ENCODE measurements at regions of chr9 and their contacts with region 1.

Region 1: DNA sequence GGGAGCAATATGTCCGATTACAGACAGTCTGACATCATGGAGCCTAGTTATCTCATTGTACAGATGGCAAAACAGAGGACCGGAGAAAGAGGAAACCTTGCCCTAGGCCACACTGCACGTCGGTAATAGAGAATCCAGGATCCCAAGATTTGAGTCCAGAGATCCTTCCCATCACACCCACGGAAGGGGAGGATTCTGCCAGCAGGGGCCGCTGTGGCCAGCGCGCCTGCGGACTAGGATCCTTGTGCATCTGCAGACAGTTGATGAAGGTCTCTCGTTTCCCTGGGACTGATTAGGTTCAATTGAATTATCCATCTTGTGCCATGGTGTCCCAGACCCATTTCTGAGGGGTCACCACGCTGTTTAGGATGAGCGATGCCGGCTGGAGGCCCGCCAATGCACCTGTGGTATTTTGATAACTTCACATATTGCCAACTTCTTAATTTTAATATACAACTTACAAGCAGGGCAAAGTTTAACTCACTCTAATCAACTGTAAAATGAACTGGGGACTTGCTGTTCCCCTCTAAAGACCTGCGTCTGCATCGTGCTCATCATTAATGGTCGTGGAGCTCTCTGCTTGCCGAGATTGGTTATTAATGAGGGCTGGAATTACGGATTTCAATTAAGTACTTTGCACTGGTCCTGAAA is 592.7 kb upstream of the BRINP1 start:
- DNase-seq: peak in 1 of 2 donors; percentile 19
- ATAC-seq: peak in 1 of 2 donors; percentile 53
- H3K4me3 ChIP-seq: no peak overlapping the region
- H3K27ac ChIP-seq: no peak overlapping the region
- H3K4me1 ChIP-seq: peaks cover 0 to 3% of the 10 kb centered on the region in 2 donors
- H3K27me3 ChIP-seq: no peaks in the 10 kb centered on the region
- CTCF ChIP-seq: peak; percentile 10 to 60 (median 39)
- POLR2A ChIP-seq: no peak

Region 2: DNA sequence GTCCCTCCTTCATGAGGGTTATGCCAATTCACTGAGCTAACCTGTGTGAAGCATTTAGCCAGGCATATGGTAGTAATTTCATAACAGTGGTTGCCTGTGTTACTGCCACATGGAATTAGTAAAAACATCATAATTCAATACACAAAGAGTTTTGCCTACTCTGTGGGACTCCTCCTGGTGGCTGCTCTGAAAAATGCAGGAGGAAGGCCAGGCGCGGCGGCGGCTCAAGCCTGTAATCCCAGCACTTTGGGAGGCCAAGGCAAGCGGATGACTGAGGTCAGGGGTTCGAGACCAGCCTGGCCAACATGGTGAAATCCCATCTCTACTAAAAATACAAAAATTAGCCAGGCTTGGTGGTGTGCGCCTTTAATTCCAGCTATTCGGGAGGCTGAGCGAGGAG is 70.7 kb after region 1 on chr9:
- in situ Hi-C with region 1: no loop called
- intact Hi-C with region 1: no loop called
- DNase-seq: no peak
- ATAC-seq: no peak
- H3K4me3 ChIP-seq: no peak overlapping the region
- H3K27ac ChIP-seq: no peak overlapping the region
- H3K4me1 ChIP-seq: no peaks in the 10 kb centered on the region
- H3K27me3 ChIP-seq: no peaks in the 10 kb centered on the region
- CTCF ChIP-seq: no peak
- POLR2A ChIP-seq: no peak

Region 3: DNA sequence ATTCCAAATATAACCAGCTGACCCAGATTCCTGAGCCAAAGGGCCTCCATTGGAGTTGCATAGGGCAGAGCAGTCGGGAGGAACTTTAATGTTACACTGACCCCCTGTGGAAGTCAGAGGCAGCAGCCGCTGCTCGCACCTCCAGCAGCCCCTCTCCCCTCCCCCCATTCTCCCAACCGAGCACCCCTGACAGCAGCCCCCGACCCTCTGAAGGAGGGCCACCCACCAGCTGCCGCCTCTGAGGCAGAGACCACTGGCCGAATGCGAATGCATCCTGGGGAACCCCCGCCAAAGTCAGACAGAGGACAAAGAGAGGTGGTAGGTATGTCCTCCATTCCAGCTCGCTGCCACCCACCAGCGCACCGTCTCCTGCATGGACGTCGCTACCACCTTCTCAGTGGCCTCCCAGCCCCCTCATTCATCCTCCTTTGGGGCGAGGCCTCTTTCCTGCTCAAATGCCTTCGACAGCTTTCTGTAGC is 387.1 kb after region 1 on chr9:
- in situ Hi-C with region 1: loop called in 1 of 4 experiments (anchors 25 kb)
- intact Hi-C with region 1: loop called (anchors 2 kb)
- DNase-seq: no peak
- ATAC-seq: peak; percentile 42 to 68
- H3K4me3 ChIP-seq: no peak overlapping the region
- H3K27ac ChIP-seq: no peak overlapping the region
- H3K4me1 ChIP-seq: no peaks in the 10 kb centered on the region
- H3K27me3 ChIP-seq: no peaks in the 10 kb centered on the region
- CTCF ChIP-seq: peak; percentile 37 to 69 (median 55)
- POLR2A ChIP-seq: no peak